ENCODE measurements at regions of chr6 and their contacts with region 1.

Region 1: DNA sequence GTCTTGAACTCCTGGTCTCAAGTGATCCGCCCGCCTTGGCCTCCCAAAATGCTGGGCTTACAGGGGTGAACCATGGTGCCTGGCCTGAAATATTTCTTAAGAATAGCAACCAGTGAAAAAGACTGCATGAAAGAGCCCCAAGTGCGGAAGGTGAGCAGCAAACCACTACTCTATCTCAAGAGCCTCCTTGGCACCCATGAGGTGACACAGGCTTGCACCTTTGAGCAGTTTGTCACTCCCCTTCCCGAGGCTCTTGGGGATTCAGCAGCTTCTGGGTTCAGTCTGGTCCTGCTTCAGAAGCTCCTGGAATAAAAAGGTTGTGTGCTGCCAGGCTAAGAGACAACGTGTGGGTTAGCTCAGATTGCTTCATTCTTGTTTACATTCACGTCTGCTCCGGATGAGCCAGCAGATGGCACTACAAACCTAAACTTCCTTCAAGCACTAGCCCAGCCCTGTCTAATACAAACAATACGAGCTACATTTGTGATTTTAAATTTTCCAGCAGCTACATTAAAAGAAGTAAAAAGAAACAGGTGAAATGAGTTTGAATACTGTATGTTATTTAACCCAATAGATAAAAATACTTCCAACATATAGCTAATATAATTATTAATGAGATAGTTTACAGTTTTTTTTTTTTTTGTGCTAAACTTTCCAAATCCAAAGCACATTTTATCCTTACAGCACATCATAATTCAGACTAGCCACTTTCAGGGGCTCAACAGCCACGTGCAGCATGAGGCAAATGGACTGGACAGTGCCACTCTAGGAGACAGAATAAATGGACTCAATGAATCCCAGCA is 46.2 kb downstream of the GJA10 start:
- DNase-seq: peak; percentile 84
- ATAC-seq: peak; percentile 87
- H3K4me3 Mint-ChIP-seq: no peak overlapping the region
- H3K27ac Mint-ChIP-seq: peak overlapping the region; percentile 59
- H3K4me1 Mint-ChIP-seq: peaks cover 55% of the 10 kb centered on the region
- H3K27me3 Mint-ChIP-seq: no peaks in the 10 kb centered on the region

Region 2: DNA sequence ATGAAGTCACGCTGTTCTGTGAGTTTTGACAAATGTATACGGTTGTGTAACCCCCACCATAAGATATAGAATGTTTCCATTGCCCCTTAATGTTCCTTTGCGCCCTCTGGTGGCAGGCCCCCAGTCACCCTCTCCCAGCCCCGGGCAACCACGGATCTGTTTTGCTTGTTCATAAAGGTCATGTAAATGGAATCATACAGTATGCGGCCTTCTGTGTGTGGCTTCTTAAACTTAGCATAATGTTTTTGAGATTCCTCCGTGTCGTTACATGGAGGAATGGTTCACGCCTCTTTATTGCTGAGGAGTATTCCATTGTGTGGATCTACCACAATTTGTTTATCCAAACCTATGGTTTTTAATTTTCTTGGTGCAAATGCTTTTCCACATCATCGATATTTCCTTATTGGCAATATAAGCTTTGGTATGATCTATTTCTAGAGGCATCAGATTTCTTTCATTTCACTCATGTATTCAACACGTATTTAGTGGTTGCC is 330.2 kb before region 1 on chr6:
- CTCF ChIA-PET with region 1: no interaction called
- POLR2A ChIA-PET with region 1: no interaction called
- DNase-seq: peak; percentile 85
- ATAC-seq: peak; percentile 88
- H3K4me3 Mint-ChIP-seq: no peak overlapping the region
- H3K27ac Mint-ChIP-seq: no peak overlapping the region
- H3K4me1 Mint-ChIP-seq: peaks cover 24% of the 10 kb centered on the region
- H3K27me3 Mint-ChIP-seq: no peaks in the 10 kb centered on the region

Region 3: GRCh38 chr6:90098001-90098531 is 157.6 kb after region 1 on chr6:
- CTCF ChIA-PET with region 1: interaction called, 14 read pairs
- POLR2A ChIA-PET with region 1: no interaction called
- DNase-seq: peak; percentile 57
- ATAC-seq: peak; percentile 29
- H3K4me3 Mint-ChIP-seq: peak overlapping the region; percentile 6
- H3K27ac Mint-ChIP-seq: peak overlapping the region; percentile 77
- H3K4me1 Mint-ChIP-seq: peaks cover 81% of the 10 kb centered on the region
- H3K27me3 Mint-ChIP-seq: no peaks in the 10 kb centered on the region

Region 4: DNA sequence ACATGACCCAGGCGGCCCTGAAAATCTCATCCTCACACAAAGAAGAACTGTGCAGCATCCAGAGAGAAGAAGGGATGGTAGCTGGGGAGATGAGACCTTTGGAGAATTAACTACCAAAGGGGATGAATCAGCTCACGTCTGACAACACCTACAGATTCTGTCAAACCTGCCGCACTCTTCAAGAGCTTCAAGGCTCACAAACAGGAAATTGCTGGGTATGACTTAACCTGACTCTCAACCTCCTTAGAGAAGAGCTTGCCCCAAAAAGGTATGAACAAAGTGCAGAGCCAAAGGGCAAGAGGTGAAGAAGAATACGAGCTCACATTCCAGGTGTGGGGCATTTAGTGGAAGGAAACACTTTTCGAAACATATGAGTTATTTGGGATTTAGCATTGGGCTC is 216.4 kb after region 1 on chr6:
- CTCF ChIA-PET with region 1: interaction called, 15 read pairs
- POLR2A ChIA-PET with region 1: no interaction called
- DNase-seq: peak; percentile 68
- ATAC-seq: peak; percentile 95
- H3K4me3 Mint-ChIP-seq: peak overlapping the region; percentile 37
- H3K27ac Mint-ChIP-seq: peak overlapping the region; percentile 84
- H3K4me1 Mint-ChIP-seq: peaks cover 70% of the 10 kb centered on the region
- H3K27me3 Mint-ChIP-seq: no peaks in the 10 kb centered on the region

Region 5: DNA sequence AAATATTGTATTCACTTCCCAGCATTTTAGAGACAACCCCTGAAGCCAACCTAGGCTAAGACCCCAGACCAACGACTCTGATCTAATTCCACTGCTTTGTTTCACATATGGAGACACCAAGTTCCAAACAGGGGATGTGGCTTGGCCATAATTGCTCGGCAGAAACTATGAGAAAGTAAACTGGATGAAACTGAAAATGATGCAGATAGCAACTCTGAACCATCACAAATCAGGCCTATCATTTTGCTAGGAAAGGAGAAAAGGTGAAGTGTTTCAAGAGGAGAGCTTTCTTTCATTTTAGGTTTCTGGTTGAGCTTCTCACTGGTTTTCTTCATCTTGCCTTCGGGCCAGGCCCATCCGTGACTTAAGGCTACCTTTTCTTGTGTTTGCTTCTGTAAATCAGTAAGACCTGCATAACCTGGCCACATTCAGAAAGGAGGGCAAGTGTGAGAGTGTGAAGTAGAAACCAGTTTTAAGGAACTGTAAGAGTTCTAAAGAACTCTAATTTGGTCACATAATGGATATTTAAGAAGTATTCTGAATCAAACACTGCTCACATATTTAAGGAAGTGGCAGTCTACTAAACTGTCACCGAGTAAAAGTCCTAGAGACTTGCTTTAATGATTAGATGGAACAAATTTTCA is 250.4 kb after region 1 on chr6:
- CTCF ChIA-PET with region 1: interaction called, 15 read pairs
- POLR2A ChIA-PET with region 1: no interaction called
- DNase-seq: peak; percentile 39
- ATAC-seq: peak; percentile 23
- H3K4me3 Mint-ChIP-seq: peak overlapping the region; percentile 15
- H3K27ac Mint-ChIP-seq: peak overlapping the region; percentile 75
- H3K4me1 Mint-ChIP-seq: peaks cover 87% of the 10 kb centered on the region
- H3K27me3 Mint-ChIP-seq: no peaks in the 10 kb centered on the region

Region 6: GRCh38 chr6:90285611-90286381 is 345.4 kb after region 1 on chr6:
- CTCF ChIA-PET with region 1: interaction called, 48 read pairs
- POLR2A ChIA-PET with region 1: no interaction called
- DNase-seq: peak; percentile 73
- ATAC-seq: peak; percentile 60
- H3K4me3 Mint-ChIP-seq: peak overlapping the region; percentile 75
- H3K27ac Mint-ChIP-seq: peak overlapping the region; percentile 78
- H3K4me1 Mint-ChIP-seq: peaks cover 89% of the 10 kb centered on the region
- H3K27me3 Mint-ChIP-seq: no peaks in the 10 kb centered on the region

Region 7: GRCh38 chr6:90478789-90479602 is 538.6 kb after region 1 on chr6:
- CTCF ChIA-PET with region 1: interaction called, 146 read pairs
- POLR2A ChIA-PET with region 1: no interaction called
- DNase-seq: peak; percentile 86
- ATAC-seq: peak; percentile 94
- H3K4me3 Mint-ChIP-seq: no peak overlapping the region
- H3K27ac Mint-ChIP-seq: peak overlapping the region; percentile 15
- H3K4me1 Mint-ChIP-seq: peaks cover 57% of the 10 kb centered on the region
- H3K27me3 Mint-ChIP-seq: no peaks in the 10 kb centered on the region

Measured in activated CD8-positive, alpha-beta T cell treated with anti-CD3 and anti-CD28 coated beads, Interleukin-2, amount 10 ng/mL, durations not matched to agents 7 days and 5 days (primary cell).